Esophagus muscularis mucosa (tissue), 4 donors: ENCODE measurements at regions of chr22 and their contacts with region 1.

Region 1: DNA sequence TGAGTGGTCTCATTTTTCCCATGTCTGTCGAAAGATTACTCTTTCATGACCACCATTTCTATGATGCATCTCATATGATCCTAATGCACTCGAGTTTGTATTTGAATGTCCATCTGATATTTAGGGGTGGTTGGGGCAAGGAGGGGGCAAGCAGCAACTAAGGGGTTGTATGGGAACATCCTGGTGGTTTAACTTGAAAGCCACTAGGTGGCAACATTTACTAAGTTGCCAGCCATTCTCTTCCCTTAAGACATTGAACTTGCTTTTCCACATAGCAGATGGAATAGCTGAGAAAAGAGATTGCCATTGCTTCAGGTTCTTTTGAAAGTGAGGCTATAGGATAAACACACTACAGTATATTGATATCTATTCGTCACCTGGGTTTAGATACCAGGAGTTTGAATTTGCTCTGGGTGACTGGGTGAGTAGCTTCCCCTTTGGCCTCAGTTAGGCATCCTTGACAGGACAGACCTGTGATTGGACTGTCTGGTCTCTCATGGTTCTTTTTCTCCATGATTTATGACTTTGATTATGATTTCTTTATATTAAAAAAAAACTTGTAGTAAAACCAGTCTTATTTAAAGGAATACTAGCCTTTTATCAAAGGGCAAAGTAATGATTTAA is 32.4 kb downstream of the NF2 start:
- DNase-seq: no peak
- H3K4me3 ChIP-seq: no peak overlapping the region
- H3K27ac ChIP-seq: no peak overlapping the region
- H3K4me1 ChIP-seq: peaks cover 1 to 22% (median 5%) of the 10 kb centered on the region in 4 donors
- H3K27me3 ChIP-seq: no peaks in the 10 kb centered on the region
- CTCF ChIP-seq: peak; percentile 46 to 63 (median 51)
- EP300 ChIP-seq: no peak
- POLR2A ChIP-seq: no peak

Region 2: GRCh38 chr22:29947410-29948384 is 311.9 kb after region 1 on chr22:
- intact Hi-C with region 1: no loop called
- DNase-seq: no peak
- H3K4me3 ChIP-seq: no peak overlapping the region
- H3K27ac ChIP-seq: peak overlapping the region in 1 of 4 donors; percentile 15
- H3K4me1 ChIP-seq: peaks cover 39 to 79% (median 77%) of the 10 kb centered on the region in 4 donors
- H3K27me3 ChIP-seq: no peaks in the 10 kb centered on the region
- CTCF ChIP-seq: no peak
- EP300 ChIP-seq: no peak
- POLR2A ChIP-seq: no peak

Region 3: DNA sequence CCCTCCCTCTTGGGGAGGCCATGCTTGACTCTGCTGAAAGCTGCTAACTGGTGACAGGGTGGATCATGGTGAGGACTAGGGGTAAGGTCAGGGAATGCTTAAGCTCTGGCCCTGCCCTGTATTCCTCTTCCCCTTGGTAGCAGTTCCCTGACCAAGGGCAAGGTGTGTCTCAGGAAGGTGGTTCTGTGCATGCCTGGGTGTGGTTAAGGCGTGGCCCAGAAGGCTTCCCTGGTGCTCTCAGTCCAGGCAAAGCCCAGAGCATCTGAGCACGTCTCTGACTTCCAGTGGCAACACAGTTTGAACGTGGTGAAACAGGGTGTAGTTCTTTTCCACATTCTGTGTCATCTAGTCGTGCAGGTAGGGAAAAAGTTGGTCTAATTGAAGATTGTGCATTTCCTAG is 391.3 kb after region 1 on chr22:
- intact Hi-C with region 1: loop called (anchors 10 kb)
- DNase-seq: no peak
- H3K4me3 ChIP-seq: no peak overlapping the region
- H3K27ac ChIP-seq: no peak overlapping the region
- H3K4me1 ChIP-seq: peaks cover 0 to 2% (median 1%) of the 10 kb centered on the region in 4 donors
- H3K27me3 ChIP-seq: no peaks in the 10 kb centered on the region
- CTCF ChIP-seq: no peak
- EP300 ChIP-seq: no peak
- POLR2A ChIP-seq: no peak

Region 4: DNA sequence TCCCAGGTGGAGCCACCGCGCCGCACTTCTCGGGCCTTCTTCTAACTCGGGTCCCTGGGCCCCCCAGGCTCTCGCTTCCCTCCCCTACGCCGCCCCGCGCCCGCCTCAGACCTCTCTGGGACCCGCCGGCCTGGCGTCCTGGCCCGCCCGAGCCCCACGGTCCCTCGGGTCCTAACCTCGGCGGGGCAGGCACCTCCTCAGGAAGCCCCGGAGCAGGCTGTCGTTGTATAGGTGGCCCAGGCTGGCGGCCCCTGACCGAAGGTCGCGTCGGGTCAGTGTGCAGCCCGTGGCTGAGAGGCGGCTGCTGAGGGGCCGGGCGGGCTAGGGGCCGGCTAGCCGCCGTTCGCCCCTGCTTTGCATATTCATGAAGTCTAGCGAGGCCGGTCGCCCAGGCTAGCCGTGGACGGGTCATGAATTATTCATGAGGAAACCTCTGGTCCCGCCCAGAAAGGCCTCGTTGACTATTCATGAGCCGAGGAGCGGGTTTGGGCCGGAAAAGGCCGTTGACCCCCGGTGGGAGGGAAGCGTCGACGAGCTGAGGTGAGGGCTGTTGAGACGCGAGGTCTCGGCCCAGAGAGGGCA is 444.2 kb after region 1 on chr22 and contains the start of gene HORMAD2:
- intact Hi-C with region 1: loop called (anchors 10 kb)
- DNase-seq: no peak
- H3K4me3 ChIP-seq: peak within 1 kb of the TSS; percentile 13 to 49 (median 32)
- H3K27ac ChIP-seq: no peak within 1 kb of the TSS
- H3K4me1 ChIP-seq: peaks cover 0 to 7% (median 5%) of the 10 kb centered on the region in 4 donors
- H3K27me3 ChIP-seq: peaks cover 0 to 36% (median 11%) of the 10 kb centered on the region in 4 donors
- CTCF ChIP-seq: no peak
- EP300 ChIP-seq: no peak
- POLR2A ChIP-seq: no peak
- total RNA-seq, gene HORMAD2: not detected